GM12878 (cell line): ENCODE measurements at regions of chr6 and their contacts with region 1.

Region 1: GRCh38 chr6:137873273-137873762 is 6.3 kb downstream of the TNFAIP3 start:
- DNase-seq: peak; percentile 95
- ATAC-seq: peak; percentile 54
- H3K4me3 ChIP-seq: peak overlapping the region; percentile 99
- H3K27ac ChIP-seq: peak overlapping the region; percentile 88
- H3K4me1 ChIP-seq: no peaks in the 10 kb centered on the region
- H3K27me3 ChIP-seq: no peaks in the 10 kb centered on the region
- CTCF ChIP-seq: no peak
- EP300 ChIP-seq: peak; percentile 62 to 64; a peak in 2 of 4 replicates
- POLR2A ChIP-seq: 0 out of 2 replicates have a peak, but pooled peaks have one; percentile 27
- RAD21 ChIP-seq: no peak

Region 2: DNA sequence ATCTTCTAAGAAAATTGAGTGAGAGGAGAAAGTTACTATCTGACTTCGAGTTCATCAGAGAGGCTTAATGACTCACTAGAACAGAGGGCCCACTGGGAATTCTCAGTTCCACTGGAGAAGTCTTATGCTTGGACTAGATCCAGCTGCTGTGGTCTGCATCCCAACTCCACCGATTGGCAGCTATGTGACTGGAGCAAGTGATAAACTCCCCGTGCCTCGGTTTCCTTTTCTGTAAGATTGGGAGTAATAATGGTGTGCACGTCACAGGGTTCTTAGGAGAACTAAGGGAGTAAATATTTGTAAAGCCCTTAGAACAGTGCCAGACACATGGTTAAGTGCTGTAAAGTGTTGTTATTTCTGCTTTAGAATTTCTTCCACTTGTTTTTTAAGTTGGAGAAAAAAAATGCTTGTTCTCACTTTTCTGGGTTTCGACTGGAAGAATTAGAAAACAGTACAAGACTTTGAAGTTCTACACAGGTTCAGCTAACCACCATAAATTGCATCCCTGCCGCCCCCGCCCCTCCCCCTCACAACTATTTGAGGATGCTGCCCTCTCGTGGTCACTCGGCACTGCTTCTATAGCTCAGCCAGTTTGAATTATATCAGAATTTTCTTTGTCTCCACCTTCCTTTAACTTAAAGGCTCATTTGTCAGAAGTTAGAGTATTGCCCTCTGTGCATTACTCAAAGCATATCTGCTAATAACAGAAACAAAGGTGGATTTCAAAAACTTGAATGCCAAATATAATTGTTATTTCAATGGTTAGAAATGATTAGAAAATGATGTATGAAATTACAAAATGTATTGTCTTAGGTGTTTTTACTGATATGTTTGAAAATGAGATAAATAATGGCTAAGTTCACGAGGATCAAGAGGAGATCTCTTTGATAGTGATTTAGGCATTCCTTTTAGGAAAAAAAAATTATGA is 559.1 kb before region 1 on chr6:
- CTCF ChIA-PET with region 1: no interaction called
- POLR2A ChIA-PET with region 1: no interaction called
- RAD21 ChIA-PET with region 1: no interaction called
- SMC1A ChIA-PET with region 1: no interaction called
- in situ Hi-C with region 1: no loop called
- intact Hi-C with region 1: no loop called
- DNase-seq: peak; percentile 43
- ATAC-seq: peak; percentile 97
- H3K4me3 ChIP-seq: no peak overlapping the region
- H3K27ac ChIP-seq: no peak overlapping the region
- H3K4me1 ChIP-seq: peaks cover 10% of the 10 kb centered on the region
- H3K27me3 ChIP-seq: no peaks in the 10 kb centered on the region
- CTCF ChIP-seq: peak; percentile 66 to 90 (median 79)
- EP300 ChIP-seq: no peak
- POLR2A ChIP-seq: no peak
- RAD21 ChIP-seq: peak; percentile 99

Region 3: DNA sequence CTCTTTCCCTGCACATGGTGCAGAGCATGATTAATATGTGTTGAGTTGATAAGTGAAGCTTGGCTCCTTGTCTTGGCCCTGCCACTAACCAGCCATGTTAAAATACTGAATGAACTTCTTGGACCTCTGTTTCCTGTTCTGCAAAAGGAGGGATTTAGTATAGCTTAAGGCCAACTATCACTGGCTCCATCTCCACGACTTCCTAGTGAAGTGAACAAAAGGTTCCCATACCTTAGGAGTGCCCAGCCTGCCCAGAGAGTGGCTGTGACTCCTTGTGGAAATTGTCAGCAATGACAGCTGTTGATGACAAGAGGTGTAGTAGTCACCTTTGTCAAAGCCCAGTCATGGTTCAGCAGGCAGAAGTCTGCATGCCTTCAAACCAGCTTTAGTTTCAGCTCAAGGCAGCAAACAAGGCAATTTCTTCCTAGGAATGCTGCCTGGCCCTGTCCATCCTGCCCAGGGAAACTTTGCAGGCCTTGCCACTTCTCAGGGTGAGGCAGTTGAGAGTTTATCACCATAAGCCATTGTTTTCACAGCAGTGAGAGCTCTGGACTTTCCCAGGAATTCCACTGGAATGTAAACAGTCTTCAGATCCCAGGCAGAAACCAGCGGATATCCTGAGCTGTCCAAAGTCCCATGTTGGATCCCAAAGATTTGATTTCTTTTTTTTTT is 175.9 kb before region 1 on chr6:
- CTCF ChIA-PET with region 1: interaction called, 3 read pairs
- POLR2A ChIA-PET with region 1: no interaction called
- RAD21 ChIA-PET with region 1: interaction called, 4 read pairs
- SMC1A ChIA-PET with region 1: interaction called, 11 read pairs
- in situ Hi-C with region 1: no loop called
- intact Hi-C with region 1: no loop called
- DNase-seq: no peak
- ATAC-seq: peak; percentile 80
- H3K4me3 ChIP-seq: no peak overlapping the region
- H3K27ac ChIP-seq: no peak overlapping the region
- H3K4me1 ChIP-seq: peaks cover 13% of the 10 kb centered on the region
- H3K27me3 ChIP-seq: no peaks in the 10 kb centered on the region
- CTCF ChIP-seq: peak; percentile 14 to 35 (median 27); a peak in 5 of 6 replicates
- EP300 ChIP-seq: no peak
- POLR2A ChIP-seq: no peak
- RAD21 ChIP-seq: peak; percentile 58

Region 4: DNA sequence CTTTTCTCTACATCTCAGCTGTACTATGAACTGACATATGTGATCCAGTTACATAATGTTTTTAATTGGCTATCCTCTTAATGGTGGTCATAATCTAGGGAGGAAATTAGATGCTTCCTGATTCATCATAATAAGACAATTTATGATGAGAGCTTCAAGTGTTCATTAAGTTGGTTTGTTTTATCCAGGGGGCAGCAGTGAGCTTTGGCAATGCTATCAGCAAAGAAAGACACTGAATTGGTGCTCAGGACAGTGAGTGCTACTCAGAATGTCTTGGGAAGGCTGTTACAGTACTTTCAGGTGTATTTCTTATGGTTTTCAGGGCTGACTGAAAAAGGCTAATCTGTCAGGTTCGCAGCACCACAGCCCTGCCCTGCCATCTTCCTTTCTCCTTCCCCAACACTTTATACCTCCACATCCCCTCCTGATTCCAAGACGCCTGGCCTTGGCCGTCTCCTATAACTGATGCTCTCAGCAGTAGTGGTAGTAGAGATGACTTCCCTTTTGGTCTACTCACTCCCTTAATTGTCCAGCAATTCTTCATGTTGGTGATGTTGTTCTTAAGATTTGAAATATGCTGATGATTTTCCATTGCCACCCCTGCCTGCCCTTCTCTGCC is 73.3 kb before region 1 on chr6:
- CTCF ChIA-PET with region 1: interaction called, 149 read pairs
- POLR2A ChIA-PET with region 1: interaction called, 7 read pairs
- RAD21 ChIA-PET with region 1: interaction called, 117 read pairs
- SMC1A ChIA-PET with region 1: interaction called, 314 read pairs
- in situ Hi-C with region 1: loop called (anchors 5 kb)
- intact Hi-C with region 1: no loop called
- DNase-seq: no peak
- ATAC-seq: peak; percentile 96
- H3K4me3 ChIP-seq: no peak overlapping the region
- H3K27ac ChIP-seq: no peak overlapping the region
- H3K4me1 ChIP-seq: peaks cover 19% of the 10 kb centered on the region
- H3K27me3 ChIP-seq: no peaks in the 10 kb centered on the region
- CTCF ChIP-seq: peak; percentile 67 to 78 (median 70)
- EP300 ChIP-seq: no peak
- POLR2A ChIP-seq: no peak
- RAD21 ChIP-seq: peak; percentile 88

Region 5: DNA sequence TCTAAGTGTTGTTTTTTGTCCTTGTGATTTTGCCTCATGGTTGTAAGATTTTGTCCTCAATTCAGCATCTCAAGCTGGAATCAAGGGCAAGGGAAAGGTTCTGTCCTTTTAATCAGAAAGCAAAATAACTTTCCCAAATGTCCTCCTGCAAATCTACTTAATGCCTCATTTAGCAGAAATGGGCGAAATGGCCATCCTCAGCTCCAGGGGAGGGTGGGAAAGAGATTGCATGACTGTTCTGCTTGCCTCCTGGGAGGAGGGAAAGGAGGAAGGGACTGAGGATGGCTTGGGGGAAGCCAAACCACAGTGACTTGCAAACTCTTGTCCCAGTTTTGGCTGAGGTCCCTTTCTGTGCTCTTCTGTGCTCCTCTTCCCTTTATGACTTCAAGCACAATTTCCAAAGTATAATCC is 37.1 kb after region 1 on chr6:
- CTCF ChIA-PET with region 1: interaction called, 64 read pairs
- POLR2A ChIA-PET with region 1: interaction called, 36 read pairs
- RAD21 ChIA-PET with region 1: interaction called, 62 read pairs
- SMC1A ChIA-PET with region 1: interaction called, 112 read pairs
- in situ Hi-C with region 1: no loop called
- intact Hi-C with region 1: loop called (anchors 1 kb)
- DNase-seq: no peak
- ATAC-seq: no peak
- H3K4me3 ChIP-seq: no peak overlapping the region
- H3K27ac ChIP-seq: peak overlapping the region; percentile 95
- H3K4me1 ChIP-seq: peaks cover 48% of the 10 kb centered on the region
- H3K27me3 ChIP-seq: no peaks in the 10 kb centered on the region
- CTCF ChIP-seq: no peak
- EP300 ChIP-seq: no peak
- POLR2A ChIP-seq: no peak
- RAD21 ChIP-seq: no peak

Region 6: GRCh38 chr6:137938770-137939379 is 65.6 kb after region 1 on chr6:
- CTCF ChIA-PET with region 1: interaction called, 712 read pairs
- POLR2A ChIA-PET with region 1: interaction called, 42 read pairs
- RAD21 ChIA-PET with region 1: interaction called, 774 read pairs
- SMC1A ChIA-PET with region 1: interaction called, 1,237 read pairs
- in situ Hi-C with region 1: loop called (anchors 5 kb)
- intact Hi-C with region 1: loop called (anchors 1 kb)
- DNase-seq: no peak
- ATAC-seq: no peak
- H3K4me3 ChIP-seq: no peak overlapping the region
- H3K27ac ChIP-seq: peak overlapping the region; percentile 82
- H3K4me1 ChIP-seq: peaks cover 35% of the 10 kb centered on the region
- H3K27me3 ChIP-seq: no peaks in the 10 kb centered on the region
- CTCF ChIP-seq: no peak
- EP300 ChIP-seq: no peak
- POLR2A ChIP-seq: no peak
- RAD21 ChIP-seq: no peak

Region 7: GRCh38 chr6:138115877-138116660 is 242.8 kb after region 1 on chr6:
- CTCF ChIA-PET with region 1: no interaction called
- POLR2A ChIA-PET with region 1: no interaction called
- RAD21 ChIA-PET with region 1: no interaction called
- SMC1A ChIA-PET with region 1: no interaction called
- in situ Hi-C with region 1: loop called (anchors 10 kb)
- intact Hi-C with region 1: no loop called
- DNase-seq: peak; percentile 33
- ATAC-seq: peak; percentile 97
- H3K4me3 ChIP-seq: no peak overlapping the region
- H3K27ac ChIP-seq: no peak overlapping the region
- H3K4me1 ChIP-seq: no peaks in the 10 kb centered on the region
- H3K27me3 ChIP-seq: peaks cover 0 to 2% of the 10 kb centered on the region in 2 experiments; a peak in 1 of 4 replicates
- CTCF ChIP-seq: peak; percentile 53 to 86 (median 64); a peak in 5 of 6 replicates
- EP300 ChIP-seq: no peak
- POLR2A ChIP-seq: no peak
- RAD21 ChIP-seq: peak; percentile 82